ENCODE measurements at regions of chr1 and their contacts with region 1.

Region 1: GRCh38 chr1:94801919-94802546 is 18.1 kb upstream of the SLC44A3 start:
- DNase-seq: peak in 1 of 2 donors; percentile 29
- H3K4me3 ChIP-seq: peak overlapping the region; percentile 15 to 39
- H3K27ac ChIP-seq: peak overlapping the region; percentile 50 to 57
- H3K4me1 ChIP-seq: peaks cover 0 to 24% (median 8%) of the 10 kb centered on the region in 4 donors
- H3K27me3 ChIP-seq: no peaks in the 10 kb centered on the region
- CTCF ChIP-seq: peak; percentile 42 to 49

Region 2: DNA sequence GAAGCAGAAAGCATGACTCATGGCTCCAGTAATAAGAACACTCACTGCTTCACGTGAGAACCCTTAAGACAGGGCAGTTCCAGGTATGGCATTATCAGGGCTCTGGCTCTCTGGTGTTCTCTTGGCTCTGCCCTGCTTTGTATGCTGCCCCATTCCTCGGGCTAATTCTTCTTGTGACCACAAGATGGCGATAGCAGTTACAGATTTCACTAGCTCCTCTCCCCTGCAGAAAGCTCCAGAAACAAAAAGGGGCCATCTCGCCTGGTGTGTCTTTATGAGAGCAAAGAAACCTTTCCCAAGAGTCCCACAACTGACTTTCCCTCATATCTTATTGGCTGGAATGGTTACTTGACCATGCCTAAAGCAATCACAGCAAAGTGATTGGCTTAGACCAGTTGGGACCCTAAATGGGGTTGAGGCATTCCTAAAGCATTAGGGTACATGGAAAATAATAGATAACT is 320.5 kb before region 1 on chr1:
- intact Hi-C with region 1: loop called (anchors 2 kb)
- DNase-seq: no peak
- H3K4me3 ChIP-seq: no peak overlapping the region
- H3K27ac ChIP-seq: no peak overlapping the region
- H3K4me1 ChIP-seq: no peaks in the 10 kb centered on the region
- H3K27me3 ChIP-seq: no peaks in the 10 kb centered on the region
- CTCF ChIP-seq: peak; percentile 71 to 80

Region 3: GRCh38 chr1:95002540-95003432 is 200.8 kb after region 1 on chr1:
- intact Hi-C with region 1: no loop called
- DNase-seq: no peak
- H3K4me3 ChIP-seq: no peak overlapping the region
- H3K27ac ChIP-seq: peak overlapping the region; percentile 23 to 40
- H3K4me1 ChIP-seq: peaks cover 0 to 28% (median 16%) of the 10 kb centered on the region in 4 donors
- H3K27me3 ChIP-seq: no peaks in the 10 kb centered on the region
- CTCF ChIP-seq: no peak